ENCODE measurements at regions of chrX and their contacts with region 1.

Region 1: GRCh38 chrX:69718102-69718501 is 102.2 kb downstream of the EDA start:
- DNase-seq: no peak
- H3K4me3 ChIP-seq: no peak overlapping the region
- H3K27ac ChIP-seq: no peak overlapping the region
- H3K4me1 ChIP-seq: no peaks in the 10 kb centered on the region
- H3K27me3 ChIP-seq: no peaks in the 10 kb centered on the region
- CTCF ChIP-seq: no peak
- EP300 ChIP-seq: no peak
- POLR2A ChIP-seq: no peak

Region 2: DNA sequence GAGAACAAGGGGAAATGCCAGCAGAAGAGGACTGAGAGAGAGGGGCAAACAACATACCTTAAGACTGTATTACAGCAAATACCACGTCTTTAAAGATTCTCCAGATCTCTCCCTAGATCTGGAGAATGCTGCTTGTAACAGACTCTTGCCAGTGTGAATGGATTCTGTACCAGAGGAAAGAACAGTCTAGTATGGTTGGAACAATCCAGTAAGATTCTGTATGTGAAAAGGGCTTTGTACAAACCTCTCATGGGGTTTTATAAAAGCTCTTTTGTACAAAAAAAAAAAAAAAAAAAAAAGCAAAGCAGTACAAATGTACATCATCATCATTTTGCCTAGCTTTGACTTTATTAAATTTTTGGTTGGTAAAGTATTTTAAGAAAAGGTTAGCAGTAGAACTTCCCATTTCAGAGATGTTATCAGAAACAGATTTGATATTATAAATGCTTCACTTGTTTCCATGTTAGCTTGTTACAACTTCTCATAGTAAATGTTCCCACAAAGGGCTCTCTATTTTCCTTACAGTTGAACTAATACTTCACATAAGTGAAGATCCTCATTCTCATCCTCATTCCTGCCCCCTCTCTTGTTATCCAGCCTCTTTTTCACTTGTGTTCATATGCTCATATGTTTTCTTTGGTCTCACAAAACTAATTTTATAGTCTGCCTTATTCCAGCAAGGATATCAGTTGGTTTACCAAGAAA is 42.0 kb after region 1 on chrX:
- intact Hi-C with region 1: loop called in 1 of 4 experiments (anchors 2 kb)
- DNase-seq: no peak
- H3K4me3 ChIP-seq: no peak overlapping the region
- H3K27ac ChIP-seq: no peak overlapping the region
- H3K4me1 ChIP-seq: no peaks in the 10 kb centered on the region
- H3K27me3 ChIP-seq: no peaks in the 10 kb centered on the region
- CTCF ChIP-seq: no peak
- EP300 ChIP-seq: no peak
- POLR2A ChIP-seq: no peak

Region 3: GRCh38 chrX:70117713-70118112 is 399.6 kb after region 1 on chrX:
- intact Hi-C with region 1: no loop called
- DNase-seq: no peak
- H3K4me3 ChIP-seq: no peak overlapping the region
- H3K27ac ChIP-seq: no peak overlapping the region
- H3K4me1 ChIP-seq: no peaks in the 10 kb centered on the region
- H3K27me3 ChIP-seq: no peaks in the 10 kb centered on the region
- CTCF ChIP-seq: no peak
- EP300 ChIP-seq: no peak
- POLR2A ChIP-seq: no peak

Measured in ovary (tissue), 10 donors.